Endothelial cell of umbilical vein (primary cell): ENCODE measurements at regions of chr10 and their contacts with region 1.

Region 1: DNA sequence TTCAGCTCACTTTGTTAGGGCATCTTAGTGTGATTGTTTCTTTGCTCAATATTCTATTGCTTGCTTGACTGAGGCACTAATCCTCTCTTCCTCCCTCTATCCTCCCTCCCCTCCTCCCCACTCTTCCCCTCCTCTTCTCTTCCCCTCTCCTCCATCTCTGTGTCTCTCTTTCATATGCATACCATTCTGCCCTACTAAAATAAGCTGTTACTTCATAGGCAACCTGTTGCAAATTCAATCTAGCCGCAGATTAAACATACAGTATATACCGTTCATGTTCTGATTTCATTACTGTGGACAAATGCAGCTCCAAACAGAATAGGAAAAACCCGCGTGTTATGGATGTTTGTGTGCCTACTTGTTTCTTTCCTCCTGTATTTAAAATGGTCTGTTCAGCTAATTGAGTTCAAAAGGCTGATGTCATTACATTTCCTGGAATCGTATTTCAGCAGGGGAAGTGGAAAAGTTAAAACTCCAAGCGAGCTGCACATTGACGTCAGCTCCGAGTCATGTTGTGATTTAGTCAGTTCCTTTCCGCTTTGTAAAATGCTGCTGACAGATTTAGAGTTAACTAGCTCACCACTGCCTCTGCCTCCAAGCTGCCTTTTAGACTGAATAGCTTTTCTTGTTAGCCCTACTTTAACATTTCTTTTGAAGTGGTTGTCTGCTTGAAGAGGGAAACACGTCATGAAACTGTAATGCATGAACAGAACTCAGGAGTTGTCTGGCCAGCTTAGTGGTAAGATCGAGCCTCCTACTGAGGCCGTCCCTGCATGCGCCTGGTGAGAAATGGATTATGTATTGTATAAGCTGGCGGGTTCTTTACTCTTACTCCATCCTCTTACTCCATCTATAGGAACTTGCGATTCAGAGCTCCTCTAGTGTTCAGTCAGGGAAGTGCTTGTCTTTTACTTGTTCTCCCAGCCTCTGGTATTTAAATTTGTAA is 69.0 kb downstream of the CREM start:
- DNase-seq: peak; percentile 99
- H3K4me3 ChIP-seq: peak overlapping the region; percentile 39 to 89 (median 67)
- H3K27ac ChIP-seq: peak overlapping the region; percentile 98
- H3K4me1 ChIP-seq: peaks cover 20% of the 10 kb centered on the region
- H3K27me3 ChIP-seq: no peaks in the 10 kb centered on the region
- CTCF ChIP-seq: peak; percentile 68 to 71
- POLR2A ChIP-seq: no peak

Region 2: GRCh38 chr10:34698983-34699382 is 496.7 kb before region 1 on chr10:
- CTCF ChIA-PET with region 1: no interaction called
- POLR2A ChIA-PET with region 1: no interaction called
- dilution Hi-C with region 1: no loop called
- intact Hi-C with region 1: loop called (anchors 10 kb)
- DNase-seq: peak; percentile 76
- H3K4me3 ChIP-seq: no peak overlapping the region
- H3K27ac ChIP-seq: no peak overlapping the region
- H3K4me1 ChIP-seq: peaks cover 47% of the 10 kb centered on the region
- H3K27me3 ChIP-seq: no peaks in the 10 kb centered on the region
- CTCF ChIP-seq: no peak
- POLR2A ChIP-seq: no peak

Region 3: DNA sequence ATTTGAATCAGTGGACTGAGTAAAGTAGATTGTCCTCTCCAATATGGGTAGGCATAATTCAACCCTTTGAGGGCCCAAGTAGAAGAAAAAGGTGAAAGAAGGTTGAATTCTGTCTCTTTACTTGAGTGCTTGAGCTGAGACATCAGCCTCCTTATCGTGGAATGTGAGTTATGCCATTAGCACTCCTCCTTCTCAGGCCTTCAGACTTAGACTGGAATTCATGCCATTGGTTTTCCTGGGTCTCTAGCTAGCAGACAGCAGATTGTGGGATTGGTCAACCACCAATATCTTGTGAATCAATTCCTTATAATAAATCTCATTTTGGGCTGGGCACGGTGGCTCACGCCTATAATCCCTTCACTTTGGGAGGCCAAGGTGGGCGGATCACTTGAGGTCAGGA is 194.7 kb before region 1 on chr10:
- CTCF ChIA-PET with region 1: no interaction called
- POLR2A ChIA-PET with region 1: no interaction called
- dilution Hi-C with region 1: no loop called
- intact Hi-C with region 1: no loop called
- DNase-seq: no peak
- H3K4me3 ChIP-seq: no peak overlapping the region
- H3K27ac ChIP-seq: no peak overlapping the region
- H3K4me1 ChIP-seq: peaks cover 2% of the 10 kb centered on the region
- H3K27me3 ChIP-seq: no peaks in the 10 kb centered on the region
- CTCF ChIP-seq: no peak
- POLR2A ChIP-seq: no peak

Region 4: GRCh38 chr10:35172574-35172973 is 23.1 kb before region 1 on chr10:
- CTCF ChIA-PET with region 1: interaction called, 57 read pairs
- POLR2A ChIA-PET with region 1: interaction called, 11 read pairs
- dilution Hi-C with region 1: no loop called
- intact Hi-C with region 1: loop called (anchors 1 kb)
- DNase-seq: peak; percentile 98
- H3K4me3 ChIP-seq: peak overlapping the region in 1 of 3 experiments; percentile 18
- H3K27ac ChIP-seq: peak overlapping the region; percentile 65
- H3K4me1 ChIP-seq: peaks cover 17% of the 10 kb centered on the region
- H3K27me3 ChIP-seq: no peaks in the 10 kb centered on the region
- CTCF ChIP-seq: no peak
- POLR2A ChIP-seq: no peak

Region 5: GRCh38 chr10:35184527-35185171 is 11.0 kb before region 1 on chr10:
- CTCF ChIA-PET with region 1: interaction called, 35 read pairs
- POLR2A ChIA-PET with region 1: interaction called, 3 read pairs
- dilution Hi-C with region 1: no loop called
- intact Hi-C with region 1: no loop called
- DNase-seq: peak; percentile 18
- H3K4me3 ChIP-seq: no peak overlapping the region
- H3K27ac ChIP-seq: no peak overlapping the region
- H3K4me1 ChIP-seq: no peaks in the 10 kb centered on the region
- H3K27me3 ChIP-seq: no peaks in the 10 kb centered on the region
- CTCF ChIP-seq: no peak
- POLR2A ChIP-seq: no peak

Region 6: GRCh38 chr10:35218339-35218955 is 22.8 kb after region 1 on chr10:
- CTCF ChIA-PET with region 1: interaction called, 59 read pairs
- POLR2A ChIA-PET with region 1: no interaction called
- dilution Hi-C with region 1: no loop called
- intact Hi-C with region 1: loop called (anchors 2 kb)
- DNase-seq: peak; percentile 86
- H3K4me3 ChIP-seq: no peak overlapping the region
- H3K27ac ChIP-seq: no peak overlapping the region
- H3K4me1 ChIP-seq: peaks cover 3% of the 10 kb centered on the region
- H3K27me3 ChIP-seq: no peaks in the 10 kb centered on the region
- CTCF ChIP-seq: peak; percentile 62 to 80
- POLR2A ChIP-seq: no peak